ENCODE measurements at regions of chr3 and their contacts with region 1.

Region 1: DNA sequence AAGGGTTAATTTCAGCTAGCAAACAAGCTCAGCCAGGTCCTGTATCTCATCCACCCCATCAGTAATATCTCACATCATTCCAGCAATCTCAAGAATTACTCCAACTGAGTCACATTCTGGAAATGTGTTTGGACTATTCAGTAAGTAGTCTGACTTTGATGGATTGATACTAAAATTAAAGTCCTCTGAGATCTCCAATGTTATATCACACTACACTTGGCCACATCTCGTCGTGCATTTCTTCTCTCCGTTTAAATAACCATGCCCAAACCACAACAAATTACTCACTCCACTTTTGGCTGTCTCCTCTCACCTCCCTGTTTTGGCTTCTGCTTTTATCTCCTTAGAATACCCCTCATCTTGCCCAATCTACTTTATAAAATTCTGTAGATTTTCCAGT is 292.2 kb downstream of the PYDC2 start:
- DNase-seq: no peak
- H3K4me3 ChIP-seq: no peak overlapping the region
- H3K27ac ChIP-seq: no peak overlapping the region
- H3K4me1 ChIP-seq: no peaks in the 10 kb centered on the region
- H3K27me3 ChIP-seq: no peaks in the 10 kb centered on the region
- CTCF ChIP-seq: no peak
- POLR2A ChIP-seq: no peak

Region 2: GRCh38 chr3:191740712-191741111 is 12.5 kb before region 1 on chr3:
- intact Hi-C with region 1: loop called (anchors 2 kb)
- DNase-seq: no peak
- H3K4me3 ChIP-seq: no peak overlapping the region
- H3K27ac ChIP-seq: no peak overlapping the region
- H3K4me1 ChIP-seq: no peaks in the 10 kb centered on the region
- H3K27me3 ChIP-seq: no peaks in the 10 kb centered on the region
- CTCF ChIP-seq: no peak
- POLR2A ChIP-seq: no peak

Region 3: DNA sequence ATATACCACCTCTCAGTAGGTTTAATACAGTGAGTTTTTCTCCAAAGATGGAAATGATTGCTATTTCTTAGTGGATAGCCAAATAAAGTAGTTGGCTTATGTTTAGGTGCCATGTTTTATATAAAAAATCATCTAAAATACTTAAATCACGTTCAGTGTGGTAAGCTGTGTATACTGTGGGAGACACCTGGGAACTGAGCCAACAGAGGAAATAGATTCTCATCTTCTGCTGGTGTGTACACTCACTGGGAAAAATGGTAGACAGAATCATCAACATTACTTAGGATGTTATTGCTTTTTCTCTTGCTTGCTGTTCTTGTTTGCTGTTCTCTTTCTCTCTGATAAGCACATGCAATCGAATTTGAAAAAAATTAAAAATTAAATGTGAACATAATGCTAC is 1277.1 kb after region 1 on chr3:
- intact Hi-C with region 1: no loop called
- DNase-seq: no peak
- H3K4me3 ChIP-seq: no peak overlapping the region
- H3K27ac ChIP-seq: no peak overlapping the region
- H3K4me1 ChIP-seq: no peaks in the 10 kb centered on the region
- H3K27me3 ChIP-seq: no peaks in the 10 kb centered on the region
- CTCF ChIP-seq: no peak
- POLR2A ChIP-seq: no peak

Measured in vagina (tissue), 2 donors.